PC-9 (cell line): ENCODE measurements at regions of chr6 and their contacts with region 1.

Region 1: GRCh38 chr6:24283043-24283985 is 74.5 kb downstream of the DCDC2 start:
- DNase-seq: peak; percentile 71 to 80
- H3K4me3 ChIP-seq: peak overlapping the region; percentile 6; the same call in 1 of the 2 replicates
- H3K27ac ChIP-seq: no peak overlapping the region
- H3K4me1 ChIP-seq: peaks cover 6% of the 10 kb centered on the region
- H3K27me3 ChIP-seq: no peaks in the 10 kb centered on the region
- CTCF ChIP-seq: peak; percentile 89

Region 2: DNA sequence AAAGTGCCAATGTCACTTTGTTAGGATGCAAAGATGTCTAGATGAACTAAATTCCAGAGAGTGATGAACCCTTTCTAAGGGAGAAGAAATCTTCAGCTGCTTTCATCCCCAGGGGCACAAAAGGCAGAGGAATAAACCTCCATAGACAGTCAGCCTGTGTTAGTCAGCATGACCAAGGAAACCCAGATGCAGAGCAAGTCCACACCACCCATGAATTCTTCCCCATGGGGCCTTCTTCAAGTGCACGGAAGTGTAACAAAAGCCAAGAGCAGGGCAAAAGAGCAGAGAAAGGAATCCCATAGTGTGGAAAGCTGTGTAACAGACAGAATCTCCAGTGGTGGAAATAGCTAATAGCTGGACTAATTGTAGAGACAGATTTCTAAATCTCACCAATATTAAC is 24.6 kb after region 1 on chr6:
- CTCF ChIA-PET with region 1: no interaction called
- POLR2A ChIA-PET with region 1: interaction called, 10 read pairs
- intact Hi-C with region 1: no loop called
- DNase-seq: no peak
- H3K4me3 ChIP-seq: no peak overlapping the region
- H3K27ac ChIP-seq: no peak overlapping the region
- H3K4me1 ChIP-seq: peaks cover 2% of the 10 kb centered on the region
- H3K27me3 ChIP-seq: no peaks in the 10 kb centered on the region
- CTCF ChIP-seq: no peak

Region 3: DNA sequence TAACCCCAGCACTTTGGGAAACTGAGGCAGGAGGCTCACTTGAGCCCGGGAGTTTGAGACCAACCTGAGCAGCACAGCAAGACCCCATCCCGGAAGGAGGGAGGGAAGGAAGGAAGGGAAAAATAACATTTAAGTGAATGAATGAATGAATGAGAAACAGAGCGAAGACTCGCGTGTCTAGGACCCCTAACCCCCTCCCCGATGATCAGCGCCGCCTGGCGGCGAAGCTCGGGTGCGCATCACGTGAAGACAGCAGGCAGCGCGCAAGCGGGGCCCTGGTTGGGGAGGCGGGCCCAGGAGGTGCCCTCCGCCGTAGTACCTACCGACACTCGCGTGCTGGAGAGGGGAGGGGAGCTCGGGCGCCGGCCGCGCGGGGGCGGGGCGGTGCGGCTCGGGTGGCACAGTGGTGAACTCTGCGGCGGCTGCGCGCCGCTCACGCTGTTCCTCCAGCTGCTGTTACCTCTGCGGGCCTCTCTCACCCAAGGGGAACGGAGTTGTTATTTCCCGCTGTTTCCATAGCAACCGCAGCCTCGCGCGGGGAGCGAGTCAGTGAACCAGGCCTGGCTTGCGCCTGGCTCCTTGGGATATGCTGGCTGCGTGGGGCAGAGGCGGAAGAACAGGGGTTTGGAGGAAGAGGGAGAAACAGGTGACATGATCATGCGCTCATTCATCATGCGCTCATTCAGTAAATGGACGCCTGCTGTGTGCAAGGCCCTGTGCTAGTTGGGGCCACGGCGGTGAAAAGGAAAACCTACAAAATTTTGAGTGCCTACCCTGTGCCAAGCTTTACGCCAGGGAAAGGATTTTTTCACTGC is 76.5 kb after region 1 on chr6:
- CTCF ChIA-PET with region 1: interaction called, 16 read pairs
- POLR2A ChIA-PET with region 1: no interaction called
- intact Hi-C with region 1: loop called (anchors 1 kb)
- DNase-seq: peak; percentile 83 to 89
- H3K4me3 ChIP-seq: peak overlapping the region; percentile 63
- H3K27ac ChIP-seq: peak overlapping the region; percentile 14; the same call in 1 of the 2 replicates
- H3K4me1 ChIP-seq: peaks cover 8% of the 10 kb centered on the region
- H3K27me3 ChIP-seq: no peaks in the 10 kb centered on the region
- CTCF ChIP-seq: peak; percentile 95

Region 4: DNA sequence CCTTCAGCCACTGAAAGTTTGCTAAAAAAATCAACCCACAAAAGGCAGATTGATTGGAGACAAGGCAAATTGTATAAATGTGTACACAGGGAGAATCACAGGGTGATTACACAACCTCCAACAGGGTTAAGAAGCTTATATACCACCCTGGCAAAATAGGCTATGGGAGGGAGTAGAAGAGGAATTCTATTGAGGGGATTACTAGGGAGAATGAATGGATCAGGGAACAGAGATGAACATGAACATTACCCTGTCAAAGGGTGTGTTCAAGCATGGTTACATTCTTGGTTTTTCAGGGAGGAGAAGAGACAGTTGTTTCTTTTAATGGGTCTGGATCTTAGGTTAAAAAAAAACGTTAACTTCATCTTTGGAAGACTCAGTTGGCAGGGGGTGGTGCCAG is 114.3 kb after region 1 on chr6:
- CTCF ChIA-PET with region 1: interaction called, 3 read pairs
- POLR2A ChIA-PET with region 1: interaction called, 18 read pairs
- intact Hi-C with region 1: no loop called
- DNase-seq: no peak
- H3K4me3 ChIP-seq: no peak overlapping the region
- H3K27ac ChIP-seq: no peak overlapping the region
- H3K4me1 ChIP-seq: peaks cover 25% of the 10 kb centered on the region
- H3K27me3 ChIP-seq: no peaks in the 10 kb centered on the region
- CTCF ChIP-seq: no peak

Region 5: GRCh38 chr6:24614043-24614420 is 330.7 kb after region 1 on chr6:
- CTCF ChIA-PET with region 1: no interaction called
- POLR2A ChIA-PET with region 1: no interaction called
- intact Hi-C with region 1: no loop called
- DNase-seq: no peak
- H3K4me3 ChIP-seq: no peak overlapping the region
- H3K27ac ChIP-seq: no peak overlapping the region
- H3K4me1 ChIP-seq: no peaks in the 10 kb centered on the region
- H3K27me3 ChIP-seq: no peaks in the 10 kb centered on the region
- CTCF ChIP-seq: no peak

Region 6: DNA sequence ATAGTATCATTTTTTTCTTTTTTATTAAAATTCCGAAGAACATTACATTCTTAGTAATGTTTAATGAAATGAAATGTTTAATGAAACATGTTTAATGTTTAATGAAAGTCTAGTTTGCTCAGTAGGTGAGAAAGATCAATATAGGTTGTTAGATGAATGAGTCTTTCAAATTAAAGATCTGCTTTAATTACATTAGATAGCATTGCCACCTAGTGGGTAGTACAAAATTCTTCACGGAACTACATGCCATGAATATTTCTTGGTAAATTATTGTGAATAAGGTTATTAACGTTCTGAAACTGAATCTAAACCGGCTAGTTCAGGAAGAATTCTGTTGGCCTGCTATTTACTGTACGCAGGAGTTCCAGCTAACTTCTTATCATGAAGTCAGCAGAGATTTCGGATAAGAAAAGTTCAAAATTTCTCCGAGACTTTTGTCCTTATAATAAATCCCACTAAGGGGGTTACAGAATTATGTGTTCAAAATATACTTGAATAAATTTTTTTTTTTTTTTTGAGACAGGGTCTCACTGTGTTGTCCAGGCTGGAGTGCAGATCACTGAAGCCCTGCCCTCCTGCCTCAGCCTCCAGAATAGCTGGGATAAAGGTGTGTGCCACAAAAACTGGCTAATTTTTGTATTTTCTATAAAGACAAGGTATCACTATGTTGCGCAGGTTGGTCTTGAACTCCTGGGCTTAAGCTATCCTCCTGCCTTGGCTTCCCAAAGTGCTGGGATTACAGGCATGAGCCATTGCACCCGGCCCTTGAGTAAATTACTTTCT is 483.6 kb after region 1 on chr6:
- CTCF ChIA-PET with region 1: no interaction called
- POLR2A ChIA-PET with region 1: no interaction called
- intact Hi-C with region 1: loop called (anchors 2 kb)
- DNase-seq: peak in 1 of 2 experiments; percentile 52
- H3K4me3 ChIP-seq: no peak overlapping the region
- H3K27ac ChIP-seq: no peak overlapping the region
- H3K4me1 ChIP-seq: no peaks in the 10 kb centered on the region
- H3K27me3 ChIP-seq: no peaks in the 10 kb centered on the region
- CTCF ChIP-seq: peak; percentile 75